ENCODE measurements at regions of chr1 and their contacts with region 1.

Region 1: GRCh38 chr1:28886731-28887418 is 27.5 kb upstream of the EPB41 start:
- DNase-seq: peak; percentile 99
- H3K4me3 ChIP-seq: peak overlapping the region; percentile 77 to 85
- H3K27ac ChIP-seq: peak overlapping the region in 1 of 2 experiments; percentile 17; a peak in 1 of 4 replicates
- H3K4me1 ChIP-seq: peaks cover 18 to 34% of the 10 kb centered on the region in 2 experiments; a peak in 2 of 4 replicates
- H3K27me3 ChIP-seq: no peaks in the 10 kb centered on the region
- CTCF ChIP-seq: no peak
- EP300 ChIP-seq: no peak
- RAD21 ChIP-seq: no peak

Region 2: GRCh38 chr1:28703629-28704028 is 183.2 kb before region 1 on chr1:
- CTCF ChIA-PET with region 1: no interaction called
- POLR2A ChIA-PET with region 1: no interaction called
- DNase-seq: no peak
- H3K4me3 ChIP-seq: no peak overlapping the region
- H3K27ac ChIP-seq: no peak overlapping the region
- H3K4me1 ChIP-seq: no peaks in the 10 kb centered on the region
- H3K27me3 ChIP-seq: no peaks in the 10 kb centered on the region
- CTCF ChIP-seq: no peak
- EP300 ChIP-seq: no peak
- RAD21 ChIP-seq: no peak

Region 3: DNA sequence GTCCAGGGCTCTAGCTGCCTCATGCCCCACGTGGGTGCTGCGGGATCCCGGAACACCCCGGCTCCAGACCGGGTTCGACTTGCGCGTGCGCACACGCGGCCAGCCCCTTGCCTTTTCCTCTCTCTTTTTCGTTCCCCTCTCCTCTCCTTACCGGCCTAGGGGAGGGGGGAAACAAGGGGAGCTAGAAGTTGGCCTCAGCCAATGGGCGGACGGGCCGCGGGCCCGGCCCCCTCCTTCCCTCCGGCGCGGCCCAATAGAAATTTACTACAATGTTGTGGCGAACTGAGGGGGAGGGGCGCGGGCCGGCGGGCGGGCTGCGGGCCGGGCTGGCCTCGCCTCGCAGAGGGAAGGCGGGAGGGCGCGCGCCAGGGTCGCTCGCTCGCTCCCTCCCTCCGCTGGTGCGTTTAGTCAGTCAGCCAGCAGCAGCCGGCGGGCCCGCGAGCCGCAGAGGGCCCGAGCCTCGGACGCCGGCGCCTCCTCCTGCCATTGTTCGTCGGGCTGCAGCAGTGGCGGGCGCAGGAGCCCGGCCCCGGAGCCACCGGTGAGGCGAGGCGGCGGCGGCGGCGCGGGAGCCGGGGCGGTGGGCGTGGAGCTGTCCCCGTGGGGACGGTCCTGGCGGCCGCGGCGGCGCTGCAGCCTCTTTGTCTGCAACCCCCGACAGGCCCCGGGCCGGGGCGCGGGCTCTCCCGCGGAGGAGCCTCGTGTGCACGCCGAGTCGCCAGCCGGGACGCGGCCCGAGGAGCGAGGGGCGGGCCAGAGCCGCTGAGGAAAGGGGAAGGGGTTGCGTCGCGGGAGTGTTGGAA is 27.6 kb after region 1 on chr1 and contains the start of gene EPB41:
- CTCF ChIA-PET with region 1: interaction called, 10 read pairs
- POLR2A ChIA-PET with region 1: no interaction called
- DNase-seq: peak; percentile 99
- H3K4me3 ChIP-seq: peak within 1 kb of the TSS; percentile 61 to 76
- H3K27ac ChIP-seq: peak within 1 kb of the TSS in 1 of 2 experiments; percentile 59; a peak in 2 of 4 replicates
- H3K4me1 ChIP-seq: peaks cover 0 to 15% of the 10 kb centered on the region in 2 experiments; a peak in 2 of 4 replicates
- H3K27me3 ChIP-seq: no peaks in the 10 kb centered on the region
- CTCF ChIP-seq: no peak
- EP300 ChIP-seq: no peak
- RAD21 ChIP-seq: no peak
- polyA plus RNA-seq, gene EPB41: 7.4 and 10.3 TPM in 2 replicates

Region 4: GRCh38 chr1:29117381-29117780 is 230.5 kb after region 1 on chr1:
- CTCF ChIA-PET with region 1: interaction called, 15 read pairs
- POLR2A ChIA-PET with region 1: no interaction called
- DNase-seq: no peak
- H3K4me3 ChIP-seq: no peak overlapping the region
- H3K27ac ChIP-seq: no peak overlapping the region
- H3K4me1 ChIP-seq: peaks cover 0 to 4% of the 10 kb centered on the region in 2 experiments; a peak in 1 of 4 replicates
- H3K27me3 ChIP-seq: no peaks in the 10 kb centered on the region
- CTCF ChIP-seq: no peak
- EP300 ChIP-seq: no peak
- RAD21 ChIP-seq: peak; percentile 36

Region 5: GRCh38 chr1:29181413-29182225 is 294.7 kb after region 1 on chr1 and contains the start of gene SRSF4:
- CTCF ChIA-PET with region 1: interaction called, 45 read pairs
- POLR2A ChIA-PET with region 1: interaction called, 4 read pairs
- DNase-seq: peak; percentile 98
- H3K4me3 ChIP-seq: peak within 1 kb of the TSS; percentile 86 to 95
- H3K27ac ChIP-seq: peak within 1 kb of the TSS; percentile 98 to 99
- H3K4me1 ChIP-seq: peaks cover 10 to 23% of the 10 kb centered on the region in 2 experiments; a peak in 3 of 4 replicates
- H3K27me3 ChIP-seq: no peaks in the 10 kb centered on the region
- CTCF ChIP-seq: peak; percentile 59
- EP300 ChIP-seq: no peak
- RAD21 ChIP-seq: peak; percentile 47
- polyA plus RNA-seq, gene SRSF4: 55.3 and 62.6 TPM in 2 replicates

Region 6: GRCh38 chr1:29202584-29203340 is 315.9 kb after region 1 on chr1:
- CTCF ChIA-PET with region 1: interaction called, 95 read pairs
- POLR2A ChIA-PET with region 1: no interaction called
- DNase-seq: peak; percentile 90
- H3K4me3 ChIP-seq: no peak overlapping the region; a peak in 1 of 4 replicates
- H3K27ac ChIP-seq: peak overlapping the region; percentile 62 to 83
- H3K4me1 ChIP-seq: peaks cover 9 to 12% of the 10 kb centered on the region in 2 experiments; a peak in 2 of 4 replicates
- H3K27me3 ChIP-seq: no peaks in the 10 kb centered on the region
- CTCF ChIP-seq: peak; percentile 98
- EP300 ChIP-seq: peak in 1 of 2 experiments; percentile 21; a peak in 1 of 4 replicates
- RAD21 ChIP-seq: peak; percentile 97